Activated B cell treated with CpG ODN at 0.5 μM for 24 hours (primary cell): ENCODE measurements at regions of chr21 and their contacts with region 1.

Region 1: GRCh38 chr21:38766987-38767722 is 38.6 kb upstream of the ETS2 start:
- DNase-seq: peak; percentile 23
- ATAC-seq: peak; percentile 96
- H3K4me3 Mint-ChIP-seq: peak overlapping the region; percentile 83
- H3K27ac Mint-ChIP-seq: peak overlapping the region; percentile 83
- H3K4me1 Mint-ChIP-seq: peaks cover 29% of the 10 kb centered on the region
- H3K27me3 Mint-ChIP-seq: peaks cover 29% of the 10 kb centered on the region
- CTCF ChIP-seq: no peak

Region 2: DNA sequence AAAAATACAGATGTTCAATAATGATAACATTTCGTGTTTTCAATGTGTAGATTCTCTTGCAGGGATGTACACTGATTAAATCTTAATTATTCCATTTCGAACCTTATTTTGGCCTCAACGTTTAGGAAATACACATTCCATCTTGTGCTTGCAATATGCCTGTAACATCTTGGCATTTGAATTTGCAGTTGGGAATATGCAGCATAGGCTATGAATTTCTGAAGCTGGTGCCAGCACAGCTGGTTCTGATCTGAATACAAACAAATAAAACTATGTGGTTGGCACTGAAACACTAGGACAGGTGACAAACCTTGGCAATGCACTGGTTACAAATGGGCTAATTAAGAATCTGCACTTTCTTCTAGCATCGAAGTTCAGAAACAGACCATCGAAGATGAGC is 377.3 kb before region 1 on chr21:
- CTCF ChIA-PET with region 1: no interaction called
- POLR2A ChIA-PET with region 1: no interaction called
- intact Hi-C with region 1: no loop called
- DNase-seq: no peak
- ATAC-seq: no peak
- H3K4me3 Mint-ChIP-seq: no peak overlapping the region
- H3K27ac Mint-ChIP-seq: no peak overlapping the region
- H3K4me1 Mint-ChIP-seq: no peaks in the 10 kb centered on the region
- H3K27me3 Mint-ChIP-seq: peaks cover 8% of the 10 kb centered on the region
- CTCF ChIP-seq: no peak

Region 3: GRCh38 chr21:38777531-38777930 is 10.4 kb after region 1 on chr21:
- CTCF ChIA-PET with region 1: no interaction called
- POLR2A ChIA-PET with region 1: no interaction called
- intact Hi-C with region 1: loop called (anchors 1 kb)
- DNase-seq: no peak
- ATAC-seq: peak; percentile 74
- H3K4me3 Mint-ChIP-seq: peak overlapping the region; percentile 3
- H3K27ac Mint-ChIP-seq: no peak overlapping the region
- H3K4me1 Mint-ChIP-seq: peaks cover 34% of the 10 kb centered on the region
- H3K27me3 Mint-ChIP-seq: peaks cover 51% of the 10 kb centered on the region
- CTCF ChIP-seq: no peak

Region 4: DNA sequence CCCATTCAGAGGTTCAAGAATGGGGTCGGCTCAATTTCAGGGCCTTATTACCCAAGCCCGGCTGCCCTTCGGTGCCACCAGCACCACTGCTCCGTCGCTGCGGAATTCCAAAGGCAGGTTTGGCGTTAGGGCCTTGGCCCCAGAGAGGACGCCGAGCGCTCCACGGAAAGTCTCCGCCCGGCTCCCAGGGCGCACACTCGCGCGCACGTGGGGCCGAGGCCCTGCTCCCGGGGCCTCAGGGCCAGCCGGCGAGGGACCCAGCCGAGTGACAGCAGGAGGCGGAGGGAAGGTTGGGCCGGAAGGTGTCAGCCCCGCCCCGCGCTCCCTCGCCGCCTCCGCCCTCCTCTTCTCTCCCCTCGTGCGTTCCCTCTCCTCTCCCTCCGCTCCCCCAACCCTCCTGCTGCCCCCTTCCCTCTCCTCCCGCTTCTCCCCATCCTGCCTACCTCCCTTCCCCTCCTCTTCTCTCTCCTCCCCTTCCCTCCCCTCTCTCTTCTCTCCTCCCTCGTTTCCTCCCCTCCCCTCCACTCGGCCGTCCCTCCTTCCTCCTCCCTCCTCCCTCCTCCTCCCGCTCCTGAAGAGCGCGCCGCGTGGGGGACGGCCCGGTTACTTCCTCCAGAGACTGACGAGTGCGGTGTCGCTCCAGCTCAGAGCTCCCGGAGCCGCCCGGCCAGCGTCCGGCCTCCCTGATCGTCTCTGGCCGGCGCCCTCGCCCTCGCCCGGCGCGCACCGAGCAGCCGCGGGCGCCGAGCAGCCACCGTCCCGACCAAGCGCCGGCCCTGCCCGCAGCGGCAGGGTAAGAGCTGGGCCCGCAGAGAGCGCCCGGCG is 38.4 kb after region 1 on chr21 and contains the start of gene ETS2:
- CTCF ChIA-PET with region 1: no interaction called
- POLR2A ChIA-PET with region 1: interaction called, 3 read pairs
- intact Hi-C with region 1: loop called (anchors 1 kb)
- DNase-seq: peak; percentile 55
- ATAC-seq: peak; percentile 83
- H3K4me3 Mint-ChIP-seq: peak within 1 kb of the TSS; percentile 83
- H3K27ac Mint-ChIP-seq: peak within 1 kb of the TSS; percentile 30
- H3K4me1 Mint-ChIP-seq: peaks cover 16% of the 10 kb centered on the region
- H3K27me3 Mint-ChIP-seq: peaks cover 9% of the 10 kb centered on the region
- CTCF ChIP-seq: no peak
- total RNA-seq, gene ETS2: 4.4 and 4.5 TPM in 2 replicates

Region 5: DNA sequence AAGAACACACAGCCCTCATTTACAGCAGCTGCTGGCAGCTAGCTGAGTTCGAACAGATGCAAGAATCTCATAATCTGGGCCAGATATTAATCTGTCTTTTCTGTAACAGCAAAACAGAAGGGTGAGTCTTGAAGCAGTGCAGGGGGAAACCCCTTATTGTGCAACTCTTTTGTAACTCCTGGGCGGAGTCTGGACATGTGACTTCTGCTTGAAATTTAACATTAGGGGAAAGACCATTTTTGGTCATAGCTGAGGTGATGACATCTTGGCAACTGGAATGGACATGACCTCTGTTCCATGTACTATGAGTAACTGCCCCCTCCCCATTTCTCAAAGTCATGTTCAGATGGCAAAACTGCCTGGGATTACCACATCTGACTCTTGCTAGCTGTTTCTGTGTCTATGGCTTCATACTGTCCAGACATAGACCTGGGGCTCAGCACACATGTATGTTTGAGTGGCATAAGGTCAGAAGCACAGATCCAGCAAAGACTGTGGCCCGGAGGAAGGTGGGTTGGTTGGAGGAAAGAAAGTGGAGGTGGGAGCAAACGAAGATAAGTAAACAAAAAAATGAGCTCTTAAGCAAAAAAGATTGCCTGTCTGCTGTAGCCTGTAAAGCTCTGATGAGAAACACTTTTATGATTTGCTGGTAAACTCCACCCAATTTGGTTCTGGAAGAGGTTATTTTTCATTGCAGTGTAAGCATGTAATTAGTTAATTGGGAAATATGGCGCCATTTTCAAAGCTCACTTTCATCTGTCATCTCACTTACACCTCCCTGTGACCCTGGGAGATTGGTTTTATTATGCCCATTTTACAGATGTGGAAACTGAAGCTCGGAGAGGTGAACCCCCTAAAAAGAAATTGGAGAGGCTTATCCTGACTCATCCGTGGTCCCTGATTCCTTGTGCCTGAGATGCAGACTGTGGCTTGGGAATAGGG is 64.6 kb after region 1 on chr21:
- CTCF ChIA-PET with region 1: no interaction called
- POLR2A ChIA-PET with region 1: no interaction called
- intact Hi-C with region 1: loop called (anchors 1 kb)
- DNase-seq: no peak
- ATAC-seq: peak; percentile 88
- H3K4me3 Mint-ChIP-seq: peak overlapping the region; percentile 29
- H3K27ac Mint-ChIP-seq: peak overlapping the region; percentile 65
- H3K4me1 Mint-ChIP-seq: peaks cover 17% of the 10 kb centered on the region
- H3K27me3 Mint-ChIP-seq: peaks cover 18% of the 10 kb centered on the region
- CTCF ChIP-seq: no peak

Region 6: GRCh38 chr21:38985568-38986378 is 218.6 kb after region 1 on chr21:
- CTCF ChIA-PET with region 1: no interaction called
- POLR2A ChIA-PET with region 1: no interaction called
- intact Hi-C with region 1: no loop called
- DNase-seq: no peak
- ATAC-seq: no peak
- H3K4me3 Mint-ChIP-seq: peak overlapping the region; percentile 17
- H3K27ac Mint-ChIP-seq: no peak overlapping the region
- H3K4me1 Mint-ChIP-seq: peaks cover 14% of the 10 kb centered on the region
- H3K27me3 Mint-ChIP-seq: peaks cover 71% of the 10 kb centered on the region
- CTCF ChIP-seq: no peak

Region 7: DNA sequence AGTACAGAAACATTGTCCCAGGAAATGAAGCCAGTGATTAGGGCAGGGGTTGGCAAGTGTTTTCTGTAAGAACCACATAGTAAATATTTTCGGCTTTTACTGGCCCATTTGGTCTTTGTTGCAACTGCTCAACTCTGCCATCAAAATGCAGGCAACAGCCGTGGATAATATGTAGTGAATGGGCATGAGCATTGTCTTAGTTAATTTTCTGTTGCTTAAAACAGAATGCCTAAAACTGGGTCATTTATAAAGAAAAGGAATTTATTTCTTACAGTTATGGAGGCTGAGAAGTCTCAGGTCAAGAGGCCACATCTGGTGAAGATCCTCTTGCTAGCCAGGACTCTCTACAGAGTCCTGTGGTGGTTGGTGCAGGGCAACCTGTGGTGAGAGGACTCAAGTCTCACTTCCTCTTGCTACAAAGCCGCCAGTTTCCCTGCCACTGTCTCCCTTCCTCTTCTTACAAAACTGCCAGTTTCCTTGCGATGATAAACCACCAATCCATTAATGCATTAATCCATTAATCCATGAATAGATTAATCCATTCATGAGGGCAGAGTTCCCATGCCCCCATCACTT is 249.7 kb after region 1 on chr21:
- CTCF ChIA-PET with region 1: no interaction called
- POLR2A ChIA-PET with region 1: no interaction called
- intact Hi-C with region 1: loop called (anchors 2 kb)
- DNase-seq: no peak
- ATAC-seq: peak; percentile 87
- H3K4me3 Mint-ChIP-seq: no peak overlapping the region
- H3K27ac Mint-ChIP-seq: no peak overlapping the region
- H3K4me1 Mint-ChIP-seq: peaks cover 16% of the 10 kb centered on the region
- H3K27me3 Mint-ChIP-seq: peaks cover 12% of the 10 kb centered on the region
- CTCF ChIP-seq: no peak